Heart left ventricle (tissue), 16 donors: ENCODE measurements at regions of chr10 and their contacts with region 1.

Region 1: GRCh38 chr10:11757821-11758463 is 15.8 kb downstream of the ECHDC3 start:
- DNase-seq: peak; percentile 83 to 91 (median 86)
- ATAC-seq: peak; percentile 77 to 86 (median 83)
- H3K4me3 ChIP-seq: no peak overlapping the region
- H3K27ac ChIP-seq: peak overlapping the region; percentile 28 to 85 (median 74)
- H3K4me1 ChIP-seq: peaks cover 0 to 64% (median 33%) of the 10 kb centered on the region in 12 donors
- H3K27me3 ChIP-seq: no peaks in the 10 kb centered on the region
- CTCF ChIP-seq: peak; percentile 85 to 96 (median 91)
- POLR2A ChIP-seq: peak in 1 of 2 donors; percentile 20

Region 2: GRCh38 chr10:11424456-11425297 is 333.3 kb before region 1 on chr10:
- intact Hi-C with region 1: loop called in 1 of 10 experiments (anchors 10 kb)
- DNase-seq: peak in 3 of 5 donors; percentile 29 to 42 (median 35)
- ATAC-seq: peak in 3 of 4 donors; percentile 54 to 76 (median 62)
- H3K4me3 ChIP-seq: no peak overlapping the region
- H3K27ac ChIP-seq: no peak overlapping the region
- H3K4me1 ChIP-seq: peaks cover 0 to 9% (median 0%) of the 10 kb centered on the region in 12 donors
- H3K27me3 ChIP-seq: no peaks in the 10 kb centered on the region
- CTCF ChIP-seq: peak; percentile 55 to 85 (median 76)
- POLR2A ChIP-seq: no peak

Region 3: DNA sequence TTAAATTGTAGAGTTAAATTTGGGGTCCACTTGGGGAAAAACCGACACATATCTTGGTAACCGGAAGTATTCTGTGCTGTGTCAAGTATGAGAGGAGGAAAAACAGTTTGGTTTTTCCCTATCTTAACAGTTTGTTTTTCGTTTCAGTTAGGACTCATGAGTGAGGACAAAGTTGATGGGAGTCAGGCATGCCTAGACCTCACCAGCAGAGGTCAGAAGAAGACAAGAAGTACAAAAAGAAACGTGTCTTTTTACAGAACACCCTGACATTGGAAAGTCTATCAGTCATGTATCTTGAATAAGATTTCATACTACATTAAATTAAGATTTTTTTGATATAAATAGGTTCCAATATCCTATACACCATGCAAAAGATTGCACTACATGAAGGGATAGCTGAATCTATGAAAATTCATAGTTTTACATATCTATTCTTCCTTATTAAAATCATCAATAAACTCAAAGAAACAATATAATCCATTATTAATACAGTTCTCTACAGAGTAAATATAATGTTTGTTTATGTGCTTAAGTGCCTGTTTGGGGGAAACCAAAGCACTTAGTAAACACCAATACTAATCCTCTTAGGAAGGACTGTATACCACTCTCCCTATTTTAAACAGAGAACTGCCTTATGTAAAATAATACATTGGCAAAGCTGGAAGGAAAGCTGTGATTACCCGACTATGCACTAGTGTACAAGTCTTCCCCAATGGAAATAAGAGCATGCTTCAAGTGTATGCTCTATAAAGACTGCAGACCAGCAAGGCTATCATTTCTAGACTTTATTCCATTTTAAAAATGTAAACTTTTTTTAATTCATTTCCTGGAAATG is 242.1 kb before region 1 on chr10:
- intact Hi-C with region 1: loop called (anchors 1 to 5 kb)
- DNase-seq: peak in 4 of 5 donors; percentile 29 to 41 (median 36)
- ATAC-seq: peak in 3 of 4 donors; percentile 76 to 90 (median 86)
- H3K4me3 ChIP-seq: no peak overlapping the region
- H3K27ac ChIP-seq: no peak overlapping the region
- H3K4me1 ChIP-seq: peaks cover 0 to 15% (median 3%) of the 10 kb centered on the region in 12 donors
- H3K27me3 ChIP-seq: no peaks in the 10 kb centered on the region
- CTCF ChIP-seq: peak; percentile 67 to 95 (median 86)
- POLR2A ChIP-seq: no peak

Region 4: GRCh38 chr10:11724938-11725776 is 32.8 kb before region 1 on chr10:
- intact Hi-C with region 1: loop called in 1 of 10 experiments (anchors 1 kb)
- DNase-seq: no peak
- ATAC-seq: peak in 3 of 4 donors; percentile 72 to 86 (median 85)
- H3K4me3 ChIP-seq: no peak overlapping the region
- H3K27ac ChIP-seq: no peak overlapping the region
- H3K4me1 ChIP-seq: peaks cover 0 to 5% (median 0%) of the 10 kb centered on the region in 12 donors
- H3K27me3 ChIP-seq: no peaks in the 10 kb centered on the region
- CTCF ChIP-seq: peak; percentile 59 to 79 (median 72)
- POLR2A ChIP-seq: no peak